Activated T-helper 1 cell treated with anti-CD3 and anti-CD28 coated beads, Interleukin-12 subunit alpha, Interleukin-12 subunit beta, Interleukin-2, Interleukin-4 antibody, amounts not matched to agents 30 ng/mL and 10 ng/mL and 1 ng/mL, durations not matched to agents 14 hours and 24 hours and 36 hours (primary cell): ENCODE measurements at regions of chr5 and their contacts with region 1.

Region 1: DNA sequence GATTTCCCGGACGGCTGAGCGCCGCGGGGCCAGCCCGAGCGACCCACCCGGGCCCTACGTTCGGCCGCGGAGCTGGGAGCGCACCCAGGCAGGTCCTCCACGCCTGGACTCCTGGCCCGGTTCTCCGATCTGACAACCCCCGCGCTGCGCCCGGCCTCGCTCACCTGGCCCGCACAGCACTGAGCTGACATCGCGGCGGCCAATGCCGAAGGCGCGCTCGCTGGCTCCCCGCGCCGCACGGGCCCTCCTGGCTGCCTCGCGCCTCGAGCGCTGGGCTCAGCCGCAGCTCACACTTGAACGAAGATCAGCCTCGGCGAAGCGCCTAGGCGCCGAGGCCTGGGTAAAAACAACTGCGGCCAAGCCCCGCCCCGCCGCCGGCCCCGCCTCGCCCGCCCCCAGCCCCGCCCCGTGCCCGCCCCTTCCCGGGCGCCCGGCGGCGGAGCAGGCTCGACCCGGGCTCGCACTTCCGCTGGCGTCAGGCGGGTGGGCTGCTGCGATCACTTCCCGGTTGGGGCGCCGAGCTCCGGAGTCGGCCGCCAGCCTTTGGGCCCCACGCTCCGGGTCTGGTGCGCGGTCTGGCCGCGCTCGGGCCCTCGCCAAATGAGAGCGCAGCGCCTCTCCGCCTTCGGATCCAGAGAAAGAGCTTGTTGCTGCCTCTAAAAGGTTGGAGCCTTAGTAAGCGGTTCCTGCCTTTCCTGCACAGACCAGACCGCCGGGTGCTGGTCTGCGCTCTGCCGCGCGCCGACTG is at the start of gene SERINC5:
- DNase-seq: peak; percentile 83
- H3K4me3 Mint-ChIP-seq: peak within 1 kb of the TSS; percentile 96
- H3K27ac Mint-ChIP-seq: peak within 1 kb of the TSS; percentile 99
- H3K4me1 Mint-ChIP-seq: peaks cover 51% of the 10 kb centered on the region
- H3K27me3 Mint-ChIP-seq: no peaks in the 10 kb centered on the region
- total RNA-seq, gene SERINC5: 21.2 and 22.8 TPM in 2 replicates

Region 2: DNA sequence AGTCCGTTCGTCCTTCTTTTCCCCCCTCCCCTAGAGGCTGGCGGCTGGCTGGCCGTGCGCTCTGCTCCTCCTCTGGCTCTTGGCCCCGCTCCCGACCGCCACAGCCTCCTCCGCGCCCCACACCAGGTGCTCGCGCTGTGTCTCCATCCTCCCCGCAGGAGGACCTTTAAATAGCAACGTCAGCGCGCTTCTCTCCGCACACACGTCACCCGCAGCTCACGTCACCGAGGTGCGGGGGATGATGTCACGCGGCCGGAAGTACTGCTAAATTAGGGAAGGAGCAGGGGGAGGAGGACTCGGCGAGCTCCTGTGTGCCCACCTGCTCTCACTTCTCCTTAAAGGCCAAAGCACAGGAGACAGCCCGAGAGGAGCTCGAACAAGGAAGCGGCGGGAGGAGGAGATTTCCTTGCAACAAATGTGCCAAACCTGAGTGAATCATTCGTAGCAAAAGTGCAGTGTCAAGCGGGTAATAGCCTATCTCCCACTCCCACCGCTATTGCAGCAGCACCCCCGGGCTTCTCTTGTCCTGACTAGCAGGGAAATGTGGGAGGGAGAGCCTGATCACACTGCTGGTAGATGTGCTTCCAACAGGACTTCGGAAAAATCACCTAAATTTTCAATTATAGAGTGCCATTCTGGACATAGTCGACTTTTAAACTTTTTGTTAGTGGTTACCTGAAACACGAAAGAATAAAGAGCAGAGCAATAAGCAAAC is 741.4 kb before region 1 on chr5:
- intact Hi-C with region 1: loop called (anchors 5 kb)
- DNase-seq: peak; percentile 88
- H3K4me3 Mint-ChIP-seq: peak overlapping the region; percentile 99
- H3K27ac Mint-ChIP-seq: peak overlapping the region; percentile 100
- H3K4me1 Mint-ChIP-seq: peaks cover 43% of the 10 kb centered on the region
- H3K27me3 Mint-ChIP-seq: peaks cover 26% of the 10 kb centered on the region

Region 3: DNA sequence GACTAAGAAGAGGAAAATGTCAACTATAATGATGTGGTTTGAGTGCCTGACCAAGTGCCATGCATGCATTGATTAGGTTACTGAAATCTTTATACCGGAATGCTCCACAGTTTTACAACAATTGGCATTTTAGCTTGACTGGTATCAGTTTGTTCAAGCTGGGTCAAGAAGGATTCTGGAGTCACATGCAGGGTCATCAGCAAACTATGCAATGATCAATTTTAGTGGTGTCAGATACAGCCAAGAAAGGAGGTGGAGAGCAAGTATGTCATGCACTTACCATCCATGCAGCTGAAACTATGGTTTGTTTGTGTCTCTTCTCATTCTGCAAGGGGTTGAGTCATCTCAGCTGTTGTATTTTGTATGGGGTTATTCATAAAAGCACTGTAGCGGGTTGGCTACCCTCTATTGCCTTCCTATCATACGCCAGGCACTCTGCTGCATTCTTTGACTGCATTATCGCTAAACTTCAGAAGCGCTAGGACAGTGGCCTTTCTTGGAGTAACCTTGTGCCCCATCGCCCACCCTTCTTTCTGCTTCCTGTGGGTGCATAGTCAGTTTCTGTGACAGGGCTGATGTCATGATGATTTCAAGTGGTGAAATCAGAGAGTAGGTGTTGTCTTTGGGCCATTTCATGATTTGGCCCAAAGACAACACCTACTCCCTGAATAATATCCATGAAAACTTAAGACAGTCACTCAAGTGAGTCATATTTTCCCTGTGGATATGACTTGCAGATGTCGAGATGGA is 410.3 kb before region 1 on chr5:
- intact Hi-C with region 1: loop called (anchors 5 kb)
- DNase-seq: peak; percentile 20
- H3K4me3 Mint-ChIP-seq: no peak overlapping the region
- H3K27ac Mint-ChIP-seq: peak overlapping the region; percentile 84
- H3K4me1 Mint-ChIP-seq: peaks cover 26% of the 10 kb centered on the region
- H3K27me3 Mint-ChIP-seq: peaks cover 4% of the 10 kb centered on the region

Region 4: GRCh38 chr5:80191991-80192398 is 63.9 kb before region 1 on chr5:
- intact Hi-C with region 1: loop called (anchors 1 kb)
- DNase-seq: peak; percentile 47
- H3K4me3 Mint-ChIP-seq: peak overlapping the region; percentile 62
- H3K27ac Mint-ChIP-seq: peak overlapping the region; percentile 86
- H3K4me1 Mint-ChIP-seq: peaks cover 86% of the 10 kb centered on the region
- H3K27me3 Mint-ChIP-seq: no peaks in the 10 kb centered on the region

Region 5: DNA sequence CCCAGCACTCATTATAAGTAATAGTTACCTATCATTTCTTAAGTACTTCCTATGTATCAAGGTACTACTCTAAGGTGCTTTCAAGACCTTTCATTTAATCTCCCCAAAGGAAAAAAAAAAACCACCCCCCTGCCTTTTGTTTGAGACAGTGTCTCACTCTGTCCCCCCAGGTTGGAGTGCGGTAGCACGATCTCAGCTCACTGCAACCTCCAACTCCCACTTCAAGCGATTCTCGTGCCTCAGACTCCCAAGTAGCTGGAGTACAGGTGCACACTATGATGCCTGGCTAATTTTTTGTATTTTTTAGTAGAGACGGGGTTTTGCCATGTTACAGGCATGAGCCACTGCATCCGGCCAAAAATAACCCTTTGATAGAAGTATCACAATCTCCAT is 30.0 kb before region 1 on chr5:
- intact Hi-C with region 1: no loop called
- DNase-seq: no peak
- H3K4me3 Mint-ChIP-seq: no peak overlapping the region
- H3K27ac Mint-ChIP-seq: no peak overlapping the region
- H3K4me1 Mint-ChIP-seq: peaks cover 24% of the 10 kb centered on the region
- H3K27me3 Mint-ChIP-seq: no peaks in the 10 kb centered on the region

Region 6: DNA sequence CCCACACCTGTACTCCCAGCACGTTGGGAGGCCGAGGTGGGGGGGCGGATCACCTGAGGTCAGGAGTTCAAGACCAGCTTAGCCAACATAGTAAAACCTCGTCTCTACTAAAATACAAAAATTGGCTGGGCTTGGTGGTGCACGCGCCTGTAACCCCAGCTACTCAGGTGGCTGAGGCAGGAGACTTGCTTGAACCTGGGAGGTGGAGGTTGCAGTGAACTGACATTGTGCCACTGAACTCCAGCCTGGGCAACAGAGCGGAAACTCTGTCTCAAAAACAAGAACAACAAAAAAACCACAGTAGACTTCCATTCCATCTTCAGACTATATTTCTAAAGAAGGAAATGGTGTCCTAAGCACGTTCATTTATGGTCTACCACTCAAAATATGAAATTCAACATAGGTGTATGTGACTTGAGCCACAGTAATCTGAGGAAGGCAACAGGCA is 14.1 kb after region 1 on chr5:
- intact Hi-C with region 1: loop called (anchors 2 kb)
- DNase-seq: no peak
- H3K4me3 Mint-ChIP-seq: peak overlapping the region; percentile 40
- H3K27ac Mint-ChIP-seq: peak overlapping the region; percentile 96
- H3K4me1 Mint-ChIP-seq: peaks cover 32% of the 10 kb centered on the region
- H3K27me3 Mint-ChIP-seq: no peaks in the 10 kb centered on the region

Region 7: GRCh38 chr5:80318212-80318611 is 62.3 kb after region 1 on chr5:
- intact Hi-C with region 1: no loop called
- DNase-seq: no peak
- H3K4me3 Mint-ChIP-seq: no peak overlapping the region
- H3K27ac Mint-ChIP-seq: no peak overlapping the region
- H3K4me1 Mint-ChIP-seq: no peaks in the 10 kb centered on the region
- H3K27me3 Mint-ChIP-seq: peaks cover 35% of the 10 kb centered on the region

Region 8: GRCh38 chr5:80407735-80408482 is 152.0 kb after region 1 on chr5 and contains the start of gene ZFYVE16:
- intact Hi-C with region 1: loop called (anchors 5 kb)
- DNase-seq: peak; percentile 95
- H3K4me3 Mint-ChIP-seq: peak within 1 kb of the TSS; percentile 96
- H3K27ac Mint-ChIP-seq: peak within 1 kb of the TSS; percentile 100
- H3K4me1 Mint-ChIP-seq: peaks cover 25% of the 10 kb centered on the region
- H3K27me3 Mint-ChIP-seq: peaks cover 6% of the 10 kb centered on the region
- total RNA-seq, gene ZFYVE16: 9.4 and 10.3 TPM in 2 replicates